ENCODE measurements at regions of chr12 and their contacts with region 1.

Region 1: DNA sequence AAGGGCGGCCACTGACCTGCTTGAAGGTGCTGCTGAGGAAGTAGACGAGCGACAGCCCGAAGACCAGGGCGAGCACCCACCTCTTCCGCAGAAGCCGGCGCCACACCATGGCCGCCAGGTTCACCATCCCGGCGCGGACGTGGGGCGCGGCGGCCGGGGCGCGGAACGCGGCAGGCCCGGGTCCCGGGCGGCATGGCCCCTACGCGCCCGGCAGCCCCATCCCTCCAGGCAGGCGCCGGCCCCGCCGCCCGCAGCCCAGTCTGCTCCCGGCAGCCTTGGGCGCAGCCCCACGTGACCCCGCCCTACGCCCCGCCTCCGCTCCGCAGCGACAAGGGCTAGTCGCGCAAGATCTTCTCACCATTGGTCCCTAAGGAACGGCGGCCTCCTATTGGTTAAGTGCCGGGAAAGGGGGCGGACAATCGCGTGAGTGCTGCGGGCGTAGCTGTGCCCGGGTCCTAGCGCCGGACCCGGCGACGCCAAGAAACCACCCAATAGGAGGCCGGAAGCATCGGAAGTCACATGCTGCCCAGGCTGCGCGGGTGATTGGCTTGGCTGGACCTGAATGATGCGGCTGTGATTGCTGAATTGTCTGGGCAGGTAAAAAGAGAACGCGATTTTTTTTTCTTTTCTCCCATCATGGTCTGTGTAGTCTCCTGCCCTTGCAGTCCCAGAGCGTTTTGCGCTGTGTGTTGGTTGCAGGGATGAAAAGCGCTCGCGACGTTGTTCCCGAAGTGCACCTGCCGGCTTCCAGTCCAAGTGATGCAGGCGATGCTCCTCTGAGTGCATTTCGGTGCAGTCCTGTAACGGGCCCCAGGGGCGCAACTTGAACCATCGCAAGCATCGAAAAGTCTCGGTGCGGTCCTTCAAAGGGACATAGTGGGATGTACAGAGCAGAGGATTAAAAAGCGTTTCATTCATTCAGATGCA is at the starts of genes RNFT2 and SPRING1:
- DNase-seq: peak; percentile 99
- ATAC-seq: peak; percentile 88
- H3K4me3 ChIP-seq: peak within 1 kb of the TSS; percentile 97
- H3K27ac ChIP-seq: no peak within 1 kb of the TSS
- H3K4me1 ChIP-seq: peaks cover 35% of the 10 kb centered on the region
- H3K27me3 ChIP-seq: no peaks in the 10 kb centered on the region
- CTCF ChIP-seq: 0 out of 2 replicates have a peak, but pooled peaks have one; percentile 21
- total RNA-seq, gene RNFT2: 12.6 and 15.8 TPM in 2 replicates
- total RNA-seq, gene SPRING1: 33.4 and 45.2 TPM in 2 replicates

Region 2: GRCh38 chr12:116818948-116819832 is 81.2 kb after region 1 on chr12:
- CTCF ChIA-PET with region 1: no interaction called
- POLR2A ChIA-PET with region 1: no interaction called
- intact Hi-C with region 1: loop called (anchors 1 kb)
- DNase-seq: peak; percentile 92
- ATAC-seq: peak; percentile 92
- H3K4me3 ChIP-seq: peak overlapping the region; percentile 86
- H3K27ac ChIP-seq: peak overlapping the region; percentile 73
- H3K4me1 ChIP-seq: peaks cover 10% of the 10 kb centered on the region
- H3K27me3 ChIP-seq: no peaks in the 10 kb centered on the region
- CTCF ChIP-seq: no peak

Region 3: GRCh38 chr12:116861320-116861719 is 123.3 kb after region 1 on chr12:
- CTCF ChIA-PET with region 1: no interaction called
- POLR2A ChIA-PET with region 1: no interaction called
- intact Hi-C with region 1: loop called (anchors 5 kb)
- DNase-seq: peak; percentile 54
- ATAC-seq: peak; percentile 58
- H3K4me3 ChIP-seq: no peak overlapping the region
- H3K27ac ChIP-seq: no peak overlapping the region
- H3K4me1 ChIP-seq: peaks cover 25% of the 10 kb centered on the region
- H3K27me3 ChIP-seq: no peaks in the 10 kb centered on the region
- CTCF ChIP-seq: no peak

Region 4: DNA sequence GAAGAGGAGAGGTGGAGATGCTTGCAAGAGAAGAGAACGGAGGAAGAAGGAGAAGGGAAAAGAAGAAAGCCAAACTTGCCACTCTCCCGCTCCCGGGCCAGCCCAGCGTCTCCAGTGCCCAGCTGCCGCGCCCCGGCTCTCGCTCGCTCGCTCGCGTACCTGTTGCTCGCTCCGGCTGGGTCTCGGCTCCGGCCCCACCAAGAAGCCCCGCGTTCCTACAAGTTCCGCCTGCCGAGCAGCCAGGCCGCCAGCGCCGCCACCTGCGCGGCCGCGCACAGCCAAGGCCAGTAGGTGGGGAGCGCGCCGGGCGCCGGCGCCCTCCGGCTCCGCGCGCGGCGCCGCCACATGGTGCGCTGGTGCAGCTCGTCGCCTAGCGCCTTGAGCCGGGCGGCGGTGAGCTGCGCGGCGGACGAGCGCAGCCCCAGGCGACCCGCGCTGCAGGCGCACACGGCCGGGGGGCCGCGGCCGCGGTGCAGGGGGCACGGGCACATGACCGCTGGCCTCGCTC is 142.8 kb after region 1 on chr12:
- CTCF ChIA-PET with region 1: no interaction called
- POLR2A ChIA-PET with region 1: no interaction called
- intact Hi-C with region 1: loop called (anchors 1 kb)
- DNase-seq: peak; percentile 72
- ATAC-seq: peak; percentile 83
- H3K4me3 ChIP-seq: peak overlapping the region; percentile 72
- H3K27ac ChIP-seq: no peak overlapping the region
- H3K4me1 ChIP-seq: peaks cover 30% of the 10 kb centered on the region
- H3K27me3 ChIP-seq: peaks cover 27% of the 10 kb centered on the region
- CTCF ChIP-seq: no peak; the same call in 1 of the 2 replicates

Region 5: DNA sequence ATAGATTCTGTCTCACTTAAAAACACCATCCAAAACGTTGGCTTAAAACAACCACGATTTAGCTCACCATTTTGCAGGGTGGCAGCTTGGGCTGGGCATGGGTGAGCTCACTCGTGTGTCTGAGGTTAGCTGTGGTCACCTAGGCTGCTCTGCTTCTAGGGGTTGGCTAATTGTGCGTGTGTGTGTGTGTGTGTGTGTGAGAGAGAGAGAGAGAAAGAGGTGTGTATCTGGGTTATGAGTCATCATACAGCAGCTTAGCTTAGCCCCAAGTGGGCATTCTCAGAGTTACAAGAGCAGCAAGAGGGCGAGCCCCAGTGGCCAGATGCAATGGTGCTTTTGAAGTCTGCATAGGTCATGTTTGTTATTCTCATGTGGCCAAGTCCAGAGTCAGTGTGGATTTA is 178.7 kb after region 1 on chr12:
- CTCF ChIA-PET with region 1: no interaction called
- POLR2A ChIA-PET with region 1: no interaction called
- intact Hi-C with region 1: loop called (anchors 5 kb)
- DNase-seq: peak; percentile 90
- ATAC-seq: peak; percentile 72
- H3K4me3 ChIP-seq: peak overlapping the region; percentile 46
- H3K27ac ChIP-seq: peak overlapping the region; percentile 89
- H3K4me1 ChIP-seq: peaks cover 54% of the 10 kb centered on the region
- H3K27me3 ChIP-seq: no peaks in the 10 kb centered on the region
- CTCF ChIP-seq: peak; percentile 66

Region 6: GRCh38 chr12:117963836-117964235 is 1225.8 kb after region 1 on chr12:
- CTCF ChIA-PET with region 1: no interaction called
- POLR2A ChIA-PET with region 1: no interaction called
- intact Hi-C with region 1: no loop called
- DNase-seq: no peak
- ATAC-seq: no peak
- H3K4me3 ChIP-seq: no peak overlapping the region
- H3K27ac ChIP-seq: no peak overlapping the region
- H3K4me1 ChIP-seq: peaks cover 15% of the 10 kb centered on the region
- H3K27me3 ChIP-seq: no peaks in the 10 kb centered on the region
- CTCF ChIP-seq: no peak

Measured in PC-3 (cell line).